Prostate gland (tissue), 2 donors: ENCODE measurements at regions of chr13 and their contacts with region 1.

Region 1: GRCh38 chr13:48532506-48533499 is at the start of gene RCBTB2:
- DNase-seq: peak; percentile 97
- H3K4me3 ChIP-seq: peak within 1 kb of the TSS; percentile 50 to 67
- H3K27ac ChIP-seq: peak within 1 kb of the TSS; percentile 97 to 98
- H3K4me1 ChIP-seq: no peaks in the 10 kb centered on the region
- H3K27me3 ChIP-seq: no peaks in the 10 kb centered on the region
- CTCF ChIP-seq: no peak
- POLR2A ChIP-seq: peak; percentile 87
- total RNA-seq, gene RCBTB2: 11.6 to 26.2 TPM

Region 2: DNA sequence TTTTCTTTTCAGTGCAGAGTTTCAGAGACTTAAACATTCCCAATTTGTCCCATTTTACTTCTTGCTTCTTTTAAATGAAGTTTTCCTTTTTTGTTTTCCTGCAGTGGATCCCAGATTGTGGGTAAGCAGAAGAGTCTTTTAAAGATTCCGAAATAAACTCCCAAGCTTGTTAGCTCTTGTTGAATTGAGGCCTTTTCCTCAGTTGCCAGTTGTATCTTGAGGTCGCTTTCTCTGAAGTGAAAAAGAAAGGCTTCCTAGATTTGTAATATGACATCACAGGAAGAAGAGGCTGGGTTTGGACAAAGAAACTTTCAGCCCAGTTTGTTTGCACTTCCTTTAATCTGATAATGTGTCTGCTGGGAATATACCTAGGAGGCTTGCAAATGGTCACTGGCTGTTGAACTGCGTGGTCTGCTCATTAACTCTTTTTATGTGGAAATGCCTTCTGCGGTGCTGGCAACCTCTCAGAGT is 119.9 kb before region 1 on chr13 and contains the start of gene LPAR6:
- intact Hi-C with region 1: loop called (anchors 5 kb)
- DNase-seq: peak; percentile 74
- H3K4me3 ChIP-seq: peak within 1 kb of the TSS; percentile 35 to 54
- H3K27ac ChIP-seq: peak within 1 kb of the TSS; percentile 83 to 86
- H3K4me1 ChIP-seq: no peaks in the 10 kb centered on the region
- H3K27me3 ChIP-seq: no peaks in the 10 kb centered on the region
- CTCF ChIP-seq: no peak
- POLR2A ChIP-seq: peak; percentile 86
- total RNA-seq, gene LPAR6: 17.3 to 66.5 TPM

Region 3: DNA sequence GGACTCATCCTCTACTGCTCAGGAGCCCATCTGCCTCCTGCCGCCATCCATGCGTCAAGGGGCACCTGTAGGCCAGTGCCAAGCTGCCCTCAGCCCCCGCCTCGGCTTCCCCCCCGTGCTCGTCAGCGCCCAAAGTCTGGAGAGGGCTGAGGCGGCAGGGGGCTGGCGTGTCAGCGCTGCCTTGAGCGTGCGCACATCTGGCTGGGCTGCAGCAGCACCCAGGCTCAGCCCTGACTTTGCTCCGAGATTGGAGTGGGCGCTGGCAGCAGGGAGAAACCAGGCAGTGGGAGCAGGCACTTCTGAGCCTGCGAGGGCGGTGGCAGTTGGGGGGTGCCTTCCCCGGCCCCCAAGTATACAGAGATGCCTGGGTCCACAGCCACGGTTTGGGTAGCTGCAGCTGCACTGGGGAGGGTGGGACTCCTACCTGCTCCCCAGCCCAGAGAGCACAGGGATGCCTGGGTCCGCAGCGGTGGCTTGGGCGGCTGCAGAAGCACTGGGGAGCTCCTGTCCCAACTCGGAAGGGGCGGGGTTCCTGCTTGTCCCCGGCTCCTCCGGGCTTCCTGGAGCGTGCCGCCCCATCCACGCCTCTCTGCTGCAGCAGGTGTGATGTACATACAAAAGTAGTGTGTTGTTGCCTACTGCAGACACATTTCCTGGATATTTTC is 75.1 kb before region 1 on chr13:
- intact Hi-C with region 1: no loop called
- DNase-seq: no peak
- H3K4me3 ChIP-seq: no peak overlapping the region
- H3K27ac ChIP-seq: no peak overlapping the region
- H3K4me1 ChIP-seq: no peaks in the 10 kb centered on the region
- H3K27me3 ChIP-seq: no peaks in the 10 kb centered on the region
- CTCF ChIP-seq: no peak
- POLR2A ChIP-seq: no peak

Region 4: GRCh38 chr13:48477191-48477855 is 55.5 kb before region 1 on chr13:
- intact Hi-C with region 1: no loop called
- DNase-seq: no peak
- H3K4me3 ChIP-seq: no peak overlapping the region
- H3K27ac ChIP-seq: no peak overlapping the region
- H3K4me1 ChIP-seq: no peaks in the 10 kb centered on the region
- H3K27me3 ChIP-seq: no peaks in the 10 kb centered on the region
- CTCF ChIP-seq: no peak
- POLR2A ChIP-seq: no peak

Region 5: GRCh38 chr13:48571126-48571913 is 38.5 kb after region 1 on chr13:
- intact Hi-C with region 1: loop called (anchors 2 kb)
- DNase-seq: no peak
- H3K4me3 ChIP-seq: no peak overlapping the region
- H3K27ac ChIP-seq: peak overlapping the region; percentile 67 to 71
- H3K4me1 ChIP-seq: no peaks in the 10 kb centered on the region
- H3K27me3 ChIP-seq: no peaks in the 10 kb centered on the region
- CTCF ChIP-seq: no peak
- POLR2A ChIP-seq: no peak